Lower lobe of right lung (tissue), 2 donors: ENCODE measurements at regions of chr11 and their contacts with region 1.

Region 1: GRCh38 chr11:100930185-100930778 is 199.3 kb downstream of the PGR start:
- DNase-seq: no peak
- ATAC-seq: peak in 1 of 2 donors; percentile 80
- H3K4me3 ChIP-seq: no peak overlapping the region
- H3K27ac ChIP-seq: no peak overlapping the region
- H3K4me1 ChIP-seq: no peaks in the 10 kb centered on the region
- H3K27me3 ChIP-seq: no peaks in the 10 kb centered on the region
- CTCF ChIP-seq: peak; percentile 63

Region 2: GRCh38 chr11:100383357-100383865 is 546.9 kb before region 1 on chr11:
- intact Hi-C with region 1: no loop called
- DNase-seq: no peak
- ATAC-seq: peak in 1 of 2 donors; percentile 9
- H3K4me3 ChIP-seq: no peak overlapping the region
- H3K27ac ChIP-seq: no peak overlapping the region
- H3K4me1 ChIP-seq: no peaks in the 10 kb centered on the region
- H3K27me3 ChIP-seq: no peaks in the 10 kb centered on the region
- CTCF ChIP-seq: no peak

Region 3: GRCh38 chr11:100575870-100576705 is 354.2 kb before region 1 on chr11:
- intact Hi-C with region 1: loop called (anchors 10 kb)
- DNase-seq: no peak
- ATAC-seq: peak; percentile 72 to 86
- H3K4me3 ChIP-seq: no peak overlapping the region
- H3K27ac ChIP-seq: no peak overlapping the region
- H3K4me1 ChIP-seq: no peaks in the 10 kb centered on the region
- H3K27me3 ChIP-seq: no peaks in the 10 kb centered on the region
- CTCF ChIP-seq: peak; percentile 55